RWPE1 (cell line): ENCODE measurements at regions of chr15 and their contacts with region 1.

Region 1: GRCh38 chr15:85044251-85044853 is 62.7 kb downstream of the PDE8A start:
- DNase-seq: peak; percentile 40
- H3K27ac ChIP-seq: no peak overlapping the region
- CTCF ChIP-seq: peak; percentile 69

Region 2: GRCh38 chr15:84955089-84955848 is 89.1 kb before region 1 on chr15:
- CTCF ChIA-PET with region 1: interaction called, 19 read pairs
- POLR2A ChIA-PET with region 1: no interaction called
- DNase-seq: peak; percentile 74
- H3K27ac ChIP-seq: no peak overlapping the region
- CTCF ChIP-seq: peak; percentile 89

Region 3: DNA sequence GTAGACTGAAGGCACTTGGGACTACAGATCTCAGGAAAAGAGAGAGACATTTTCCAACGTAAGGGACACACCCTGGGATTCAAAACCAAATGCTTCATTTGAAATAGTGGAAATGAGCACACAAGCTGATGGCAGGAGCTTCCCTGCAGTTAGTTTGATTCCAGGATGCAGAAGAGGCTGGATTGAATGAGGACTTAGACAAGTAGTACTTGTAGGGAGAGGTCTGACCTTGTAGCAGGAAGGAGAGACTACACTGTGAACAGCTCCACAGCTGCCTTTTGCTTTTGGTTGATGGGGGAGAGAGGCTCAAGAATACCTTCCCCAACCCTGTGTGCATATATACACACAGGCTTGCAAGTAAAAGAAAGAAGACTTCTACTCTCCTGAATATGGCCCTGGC is 11.2 kb before region 1 on chr15:
- CTCF ChIA-PET with region 1: interaction called, 10 read pairs
- POLR2A ChIA-PET with region 1: no interaction called
- DNase-seq: no peak
- H3K27ac ChIP-seq: no peak overlapping the region
- CTCF ChIP-seq: no peak

Region 4: DNA sequence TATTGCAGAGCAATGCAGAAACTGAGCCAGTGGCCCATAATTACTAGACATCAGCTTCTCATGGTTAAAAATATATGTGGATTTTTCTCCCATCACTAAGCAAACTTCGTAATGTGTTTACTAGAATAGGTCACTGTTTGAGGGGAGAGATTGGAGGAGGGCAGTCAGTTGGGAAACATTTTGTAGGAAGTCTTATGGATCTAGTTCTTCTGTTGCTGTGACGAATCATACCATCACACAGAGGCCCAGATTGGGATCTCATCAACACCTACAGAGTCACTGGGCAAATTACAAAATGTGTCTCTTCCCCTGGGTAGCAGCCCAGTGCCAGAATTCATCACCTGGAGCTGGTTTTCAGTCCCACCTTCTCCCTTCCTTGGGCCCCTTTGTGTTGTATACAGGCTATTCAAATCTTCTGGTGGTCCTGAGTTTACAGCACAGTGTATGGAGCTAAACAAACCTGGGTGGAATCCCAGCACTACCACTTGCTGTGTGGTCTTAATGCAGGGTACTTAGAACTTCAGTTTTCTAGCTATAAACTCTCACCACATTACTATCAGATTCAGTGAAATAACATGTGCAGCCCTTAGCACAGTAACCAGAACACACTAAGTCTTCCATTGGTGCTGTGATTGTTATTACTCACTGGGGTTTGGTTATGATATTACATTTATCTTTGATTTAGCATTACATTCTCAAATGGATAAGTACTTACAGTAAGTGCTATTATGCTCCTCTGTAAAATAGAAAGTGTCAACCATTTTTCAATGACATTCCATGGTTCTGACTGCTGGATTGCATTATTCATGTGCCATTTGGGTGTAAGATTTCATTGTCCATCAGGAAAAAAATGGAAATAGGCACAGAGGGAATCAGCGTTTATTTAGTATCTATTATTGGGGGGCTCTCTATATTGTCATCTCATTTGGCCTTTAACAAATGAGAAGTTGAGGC is 19.1 kb after region 1 on chr15:
- CTCF ChIA-PET with region 1: no interaction called
- POLR2A ChIA-PET with region 1: no interaction called
- DNase-seq: no peak
- H3K27ac ChIP-seq: no peak overlapping the region
- CTCF ChIP-seq: no peak